ENCODE measurements at regions of chr21 and their contacts with region 1.

Region 1: DNA sequence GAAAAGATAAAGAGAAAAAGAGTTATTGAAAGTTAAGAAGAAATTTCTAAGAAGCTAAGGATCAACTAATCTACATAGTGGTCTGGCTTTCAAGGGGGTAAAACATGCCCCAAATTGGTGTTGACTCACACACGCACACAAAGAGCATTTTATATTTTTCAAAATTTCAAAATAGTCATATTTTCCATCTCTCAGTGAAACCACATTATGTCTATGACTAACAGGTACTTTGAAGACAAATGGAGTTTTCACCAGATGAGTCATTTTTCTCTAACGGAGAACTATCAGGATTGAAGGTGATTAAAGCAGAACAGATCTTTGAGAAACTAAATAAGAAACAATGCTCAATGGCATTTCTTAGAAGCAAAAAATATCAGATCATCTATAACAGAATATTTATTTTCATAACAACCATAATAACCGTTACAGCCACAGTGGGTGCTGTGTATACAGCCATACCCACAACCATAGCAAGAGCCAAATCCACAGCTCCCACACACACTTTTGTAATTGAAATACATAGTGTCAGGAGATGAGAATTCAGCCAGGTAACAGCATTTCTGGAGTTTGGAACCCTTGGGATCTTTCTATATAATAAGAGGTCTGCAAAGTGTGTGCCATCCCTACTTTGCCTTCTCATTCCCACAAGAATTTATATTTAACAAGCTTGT is at the start of gene KRTAP21-3:
- DNase-seq: no peak
- H3K4me3 Mint-ChIP-seq: no peak within 1 kb of the TSS
- H3K27ac Mint-ChIP-seq: peak within 1 kb of the TSS; percentile 86
- H3K4me1 Mint-ChIP-seq: peaks cover 36% of the 10 kb centered on the region
- H3K27me3 Mint-ChIP-seq: no peaks in the 10 kb centered on the region
- total RNA-seq, gene KRTAP21-3: not detected in 2 replicates

Region 2: DNA sequence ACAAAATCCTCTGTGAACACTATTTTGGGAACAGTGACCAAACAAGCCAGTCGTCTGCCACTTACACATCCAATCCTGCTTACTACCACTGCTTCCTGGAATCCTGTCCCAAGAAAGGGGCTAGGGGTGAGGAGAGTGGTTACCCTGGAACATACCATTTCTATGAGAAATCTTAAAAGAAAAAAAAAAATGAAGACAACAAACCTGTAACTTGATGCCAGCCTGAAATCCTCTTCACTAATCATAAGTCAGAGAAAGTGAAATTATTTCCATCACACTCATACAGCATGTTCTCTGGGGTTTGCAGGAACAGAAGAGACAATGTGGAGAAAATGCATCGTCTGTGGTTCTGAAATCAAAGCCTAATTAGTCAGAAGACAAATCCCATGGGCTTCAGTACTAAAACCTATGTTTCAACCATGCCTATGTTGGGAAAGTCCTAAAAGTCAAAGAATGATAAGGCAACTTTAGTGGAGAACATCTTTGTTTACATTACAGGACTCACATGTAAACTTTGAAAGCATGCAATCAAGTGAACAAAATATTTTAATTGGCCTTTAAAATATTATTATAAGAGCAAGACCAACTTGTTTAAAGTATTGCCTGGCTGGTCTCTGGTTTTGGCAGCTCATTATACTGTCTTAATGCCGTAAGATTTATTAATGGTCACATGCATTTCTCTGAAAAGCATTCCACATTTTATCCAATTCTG is 1946.4 kb before region 1 on chr21:
- intact Hi-C with region 1: loop called (anchors 10 kb)
- DNase-seq: no peak
- H3K4me3 Mint-ChIP-seq: no peak overlapping the region
- H3K27ac Mint-ChIP-seq: no peak overlapping the region
- H3K4me1 Mint-ChIP-seq: peaks cover 40% of the 10 kb centered on the region
- H3K27me3 Mint-ChIP-seq: no peaks in the 10 kb centered on the region

Region 3: DNA sequence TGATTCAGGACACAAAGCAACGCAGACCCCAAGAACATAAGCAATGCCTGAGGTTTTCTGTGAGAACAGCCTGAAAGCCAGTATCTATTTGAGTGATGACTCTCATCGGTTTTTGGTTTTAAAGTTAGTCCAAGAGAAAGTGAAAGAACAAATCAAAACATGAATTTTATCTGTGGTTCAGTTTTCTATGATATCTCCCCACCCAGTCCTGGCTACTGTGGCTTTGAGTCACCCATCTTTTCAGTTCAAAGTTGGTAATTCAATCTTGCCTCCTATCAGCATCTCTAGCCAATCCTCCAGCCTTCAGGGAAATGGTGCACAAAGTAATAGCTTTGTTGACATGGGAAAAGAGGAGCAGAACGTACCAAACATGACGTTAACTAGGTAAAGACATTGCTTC is 360.4 kb after region 1 on chr21:
- intact Hi-C with region 1: loop called (anchors 5 kb)
- DNase-seq: no peak
- H3K4me3 Mint-ChIP-seq: no peak overlapping the region
- H3K27ac Mint-ChIP-seq: no peak overlapping the region
- H3K4me1 Mint-ChIP-seq: peaks cover 17% of the 10 kb centered on the region
- H3K27me3 Mint-ChIP-seq: peaks cover 61% of the 10 kb centered on the region

Region 4: GRCh38 chr21:31185663-31186062 is 467.3 kb after region 1 on chr21:
- intact Hi-C with region 1: loop called (anchors 2 kb)
- DNase-seq: no peak
- H3K4me3 Mint-ChIP-seq: peak overlapping the region; percentile 70
- H3K27ac Mint-ChIP-seq: peak overlapping the region; percentile 92
- H3K4me1 Mint-ChIP-seq: peaks cover 76% of the 10 kb centered on the region
- H3K27me3 Mint-ChIP-seq: no peaks in the 10 kb centered on the region

Region 5: DNA sequence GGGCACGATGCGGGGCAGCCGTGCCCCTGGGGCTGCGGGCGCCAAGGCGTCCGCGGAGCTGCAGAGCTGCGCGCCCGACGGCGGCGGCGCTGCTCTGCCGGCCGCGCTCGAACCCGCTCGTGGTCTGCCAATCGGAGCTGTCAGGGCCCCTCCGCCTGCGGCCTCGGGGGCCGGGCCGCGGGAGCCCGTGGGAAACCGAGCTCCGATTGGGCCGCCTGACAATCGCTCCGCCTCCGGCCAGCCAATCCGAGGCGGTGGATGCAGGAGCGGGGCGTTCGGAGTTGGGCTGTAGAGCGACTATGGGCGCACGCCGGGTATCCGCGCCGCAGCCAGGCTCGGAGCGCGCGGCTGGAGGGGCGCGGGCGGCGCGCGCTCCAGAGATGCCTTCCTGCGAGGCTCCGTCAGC is 840.6 kb after region 1 on chr21:
- intact Hi-C with region 1: loop called (anchors 5 kb)
- DNase-seq: peak; percentile 92
- H3K4me3 Mint-ChIP-seq: peak overlapping the region; percentile 81
- H3K27ac Mint-ChIP-seq: no peak overlapping the region
- H3K4me1 Mint-ChIP-seq: peaks cover 34% of the 10 kb centered on the region
- H3K27me3 Mint-ChIP-seq: peaks cover 40% of the 10 kb centered on the region

Measured in activated T-helper 2 cell treated with anti-CD3 and anti-CD28 coated beads, Interferon-gamma antibody, Interleukin-2, Interleukin-4, amounts not matched to agents 10 μg/mL and 5 μg/mL and 100 μg/mL, durations not matched to agents 14 hours and 24 hours and 36 hours (primary cell).